B cell (primary cell): ENCODE measurements at regions of chr5 and their contacts with region 1.

Region 1: GRCh38 chr5:159106569-159107282 is 7.0 kb upstream of the EBF1 start:
- DNase-seq: peak; percentile 88
- ATAC-seq: peak; percentile 75
- H3K4me3 ChIP-seq: peak overlapping the region; percentile 44 to 70 (median 66)
- H3K4me3 Mint-ChIP-seq: peak overlapping the region; percentile 100
- H3K27ac ChIP-seq: no peak overlapping the region
- H3K27ac Mint-ChIP-seq: peak overlapping the region; percentile 87
- H3K4me1 ChIP-seq: peaks cover 42 to 48% of the 10 kb centered on the region in 2 donors
- H3K4me1 Mint-ChIP-seq: peaks cover 52% of the 10 kb centered on the region
- H3K27me3 ChIP-seq: no peaks in the 10 kb centered on the region
- H3K27me3 Mint-ChIP-seq: no peaks in the 10 kb centered on the region
- CTCF ChIP-seq: peak; percentile 98

Region 2: DNA sequence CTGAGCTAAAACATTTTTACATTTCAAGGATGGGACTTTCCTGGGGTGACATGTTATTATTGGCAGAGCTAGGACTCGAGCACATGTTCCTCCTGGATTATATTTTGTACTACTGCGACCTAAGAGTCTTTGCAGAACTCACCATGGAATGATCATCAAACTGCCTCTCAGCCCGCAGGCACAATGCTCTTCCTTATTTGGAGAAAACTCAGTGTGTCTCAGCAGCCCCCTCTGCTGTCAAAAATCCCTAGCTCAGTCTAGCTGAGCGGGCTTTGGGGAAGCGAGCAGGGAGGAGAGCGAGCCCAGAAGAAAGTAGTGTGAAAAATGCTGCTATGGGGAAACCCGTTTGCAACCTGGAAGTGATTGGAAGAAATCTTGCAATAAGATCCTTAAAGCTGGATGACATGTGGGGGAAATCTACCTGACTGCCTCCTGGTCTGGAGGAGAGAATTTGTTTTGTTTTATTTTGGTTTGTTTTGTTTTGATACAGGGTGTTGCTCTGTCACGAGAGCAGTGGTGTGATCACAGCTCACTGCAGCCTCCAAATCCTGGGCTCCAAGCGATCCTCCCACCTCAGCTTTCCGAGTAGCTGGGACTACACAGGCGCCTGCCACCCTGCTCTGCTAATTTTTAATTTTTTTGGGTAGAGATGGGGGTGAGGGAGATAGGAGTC is 1157.9 kb before region 1 on chr5:
- CTCF ChIA-PET with region 1: interaction called, 6 read pairs
- POLR2A ChIA-PET with region 1: no interaction called
- intact Hi-C with region 1: loop called (anchors 2 kb)
- DNase-seq: peak; percentile 89
- ATAC-seq: peak; percentile 98
- H3K4me3 ChIP-seq: no peak overlapping the region
- H3K4me3 Mint-ChIP-seq: peak overlapping the region; percentile 33
- H3K27ac ChIP-seq: no peak overlapping the region
- H3K27ac Mint-ChIP-seq: no peak overlapping the region
- H3K4me1 ChIP-seq: peaks cover 6 to 8% of the 10 kb centered on the region in 2 donors
- H3K4me1 Mint-ChIP-seq: peaks cover 5% of the 10 kb centered on the region
- H3K27me3 ChIP-seq: peaks cover 0 to 4% (median 0%) of the 10 kb centered on the region in 4 experiments
- H3K27me3 Mint-ChIP-seq: peaks cover 18% of the 10 kb centered on the region
- CTCF ChIP-seq: peak; percentile 87

Region 3: DNA sequence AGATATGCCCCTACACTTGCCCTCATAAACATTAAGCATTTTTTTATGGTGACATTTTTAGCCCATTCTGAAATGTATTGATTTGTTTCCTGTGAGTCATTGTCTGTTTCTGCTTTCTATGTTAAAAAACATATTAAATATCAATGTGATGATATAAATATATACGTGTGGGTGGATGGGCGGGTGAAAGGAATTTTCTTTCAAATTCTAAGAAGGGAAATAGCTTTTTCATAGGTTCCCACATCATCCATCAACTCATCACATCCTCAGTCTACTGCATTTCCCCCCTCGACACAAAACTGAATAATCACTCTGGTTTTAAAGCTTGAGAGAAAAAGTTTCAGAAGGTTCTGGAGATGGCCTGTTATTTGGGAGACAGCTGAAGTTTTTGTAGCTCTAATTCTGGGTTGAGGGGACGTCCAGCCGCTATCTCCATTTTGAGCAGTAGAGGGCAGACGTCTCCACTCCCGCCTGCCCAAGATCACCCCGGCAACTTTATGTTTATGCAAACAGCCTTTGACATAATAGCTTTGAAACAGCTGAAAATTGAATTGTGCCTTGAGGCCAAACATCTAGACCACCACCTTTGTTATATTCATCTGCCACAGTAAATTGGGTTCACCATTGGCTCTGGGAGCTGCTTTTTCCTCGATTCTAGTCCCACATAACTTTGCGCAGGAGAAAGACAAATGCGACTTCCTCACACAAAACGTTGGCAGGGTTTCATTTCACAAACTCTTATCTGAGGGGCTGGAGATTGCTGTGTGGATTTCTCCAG is 1031.5 kb before region 1 on chr5:
- CTCF ChIA-PET with region 1: interaction called, 106 read pairs
- POLR2A ChIA-PET with region 1: no interaction called
- intact Hi-C with region 1: loop called (anchors 1 kb)
- DNase-seq: peak; percentile 78
- ATAC-seq: peak; percentile 90
- H3K4me3 ChIP-seq: peak overlapping the region in 2 of 5 experiments; percentile 10 to 20
- H3K4me3 Mint-ChIP-seq: peak overlapping the region; percentile 12
- H3K27ac ChIP-seq: no peak overlapping the region
- H3K27ac Mint-ChIP-seq: peak overlapping the region; percentile 43
- H3K4me1 ChIP-seq: peaks cover 12 to 20% of the 10 kb centered on the region in 2 donors
- H3K4me1 Mint-ChIP-seq: peaks cover 21% of the 10 kb centered on the region
- H3K27me3 ChIP-seq: peaks cover 0 to 3% (median 0%) of the 10 kb centered on the region in 4 experiments
- H3K27me3 Mint-ChIP-seq: no peaks in the 10 kb centered on the region
- CTCF ChIP-seq: peak; percentile 82

Region 4: DNA sequence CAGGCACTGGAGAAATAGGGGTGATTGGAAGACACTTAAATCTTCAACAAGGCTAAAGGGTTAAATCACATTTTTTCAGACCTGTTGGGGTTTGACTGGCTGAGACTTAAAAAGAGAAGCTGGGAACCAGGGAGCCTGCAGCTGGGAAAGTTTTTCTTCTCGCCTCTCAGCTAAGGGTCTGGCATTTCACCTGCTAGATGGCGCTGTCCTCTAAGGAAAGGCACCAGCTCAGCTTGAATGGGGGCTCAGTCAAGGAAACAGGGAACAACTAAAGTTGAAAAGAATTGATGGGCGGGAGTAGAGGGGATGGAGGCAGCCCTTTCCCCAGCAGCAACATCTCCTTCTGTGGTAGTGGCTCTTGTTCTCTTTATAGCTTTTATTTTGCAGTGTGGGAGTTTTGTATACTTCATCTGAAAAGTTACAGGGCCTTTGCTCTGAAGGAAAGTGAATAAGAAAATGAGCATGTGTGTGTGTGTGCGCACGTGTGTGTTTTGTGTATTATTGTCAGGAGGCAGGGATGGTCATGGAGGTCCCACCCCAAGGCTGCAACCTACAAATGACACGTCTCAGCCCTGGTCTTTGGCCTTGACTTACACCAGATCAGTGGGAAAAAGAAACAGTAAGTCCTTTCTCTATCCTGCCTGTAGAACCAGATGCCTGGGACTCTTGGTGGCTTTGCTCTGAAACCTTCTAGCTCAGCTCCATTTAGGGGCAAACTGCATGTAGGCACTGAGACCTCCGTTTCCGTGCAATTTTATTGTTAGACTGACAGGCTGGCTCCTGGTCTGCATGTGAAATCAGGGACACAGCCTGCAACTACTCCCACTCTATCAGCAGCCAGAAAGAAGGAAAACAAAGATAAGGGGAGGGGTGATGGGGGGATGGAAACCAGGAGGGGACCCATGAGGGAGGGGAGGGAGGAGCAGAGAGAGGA is 931.5 kb before region 1 on chr5:
- CTCF ChIA-PET with region 1: interaction called, 238 read pairs
- POLR2A ChIA-PET with region 1: interaction called, 17 read pairs
- intact Hi-C with region 1: loop called (anchors 1 kb)
- DNase-seq: peak; percentile 82
- ATAC-seq: peak; percentile 88
- H3K4me3 ChIP-seq: no peak overlapping the region
- H3K4me3 Mint-ChIP-seq: no peak overlapping the region
- H3K27ac ChIP-seq: no peak overlapping the region
- H3K27ac Mint-ChIP-seq: no peak overlapping the region
- H3K4me1 ChIP-seq: peaks cover 22 to 34% of the 10 kb centered on the region in 2 donors
- H3K4me1 Mint-ChIP-seq: peaks cover 30% of the 10 kb centered on the region
- H3K27me3 ChIP-seq: no peaks in the 10 kb centered on the region
- H3K27me3 Mint-ChIP-seq: no peaks in the 10 kb centered on the region
- CTCF ChIP-seq: peak; percentile 82

Region 5: GRCh38 chr5:158875272-158875679 is 231.4 kb before region 1 on chr5:
- CTCF ChIA-PET with region 1: interaction called, 15 read pairs
- POLR2A ChIA-PET with region 1: no interaction called
- intact Hi-C with region 1: loop called (anchors 2 kb)
- DNase-seq: peak; percentile 70
- ATAC-seq: peak; percentile 41
- H3K4me3 ChIP-seq: peak overlapping the region in 2 of 5 experiments; percentile 12 to 34
- H3K4me3 Mint-ChIP-seq: peak overlapping the region; percentile 84
- H3K27ac ChIP-seq: peak overlapping the region; percentile 74 to 80
- H3K27ac Mint-ChIP-seq: peak overlapping the region; percentile 76
- H3K4me1 ChIP-seq: peaks cover 71 to 81% of the 10 kb centered on the region in 2 donors
- H3K4me1 Mint-ChIP-seq: peaks cover 89% of the 10 kb centered on the region
- H3K27me3 ChIP-seq: no peaks in the 10 kb centered on the region
- H3K27me3 Mint-ChIP-seq: no peaks in the 10 kb centered on the region
- CTCF ChIP-seq: no peak

Region 6: DNA sequence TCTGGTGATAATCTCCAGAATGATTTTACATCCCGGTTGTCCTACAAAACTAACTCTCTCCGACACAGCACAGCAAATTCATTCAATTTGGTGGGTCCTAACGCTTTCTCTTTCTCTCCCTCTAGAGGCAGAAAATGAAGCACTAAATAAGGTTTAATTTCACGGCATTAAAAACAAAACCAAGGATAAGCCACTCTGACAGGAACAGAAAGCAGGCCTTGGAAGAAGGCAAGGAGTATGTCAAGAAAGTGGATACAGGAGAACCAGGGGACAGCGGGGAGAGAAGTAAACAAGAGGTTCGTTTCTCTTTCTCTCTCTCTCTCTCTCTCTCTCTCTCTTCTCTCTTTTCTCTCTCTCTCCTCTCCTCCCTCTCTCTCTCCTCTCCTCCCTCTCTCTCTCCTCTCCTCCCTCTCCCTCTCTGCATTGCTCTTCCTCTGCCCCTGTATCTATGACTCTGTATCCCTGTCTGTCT is 56.8 kb before region 1 on chr5:
- CTCF ChIA-PET with region 1: interaction called, 15 read pairs
- POLR2A ChIA-PET with region 1: no interaction called
- intact Hi-C with region 1: no loop called
- DNase-seq: peak; percentile 57
- ATAC-seq: no peak
- H3K4me3 ChIP-seq: peak overlapping the region in 3 of 5 experiments; percentile 16 to 28 (median 17)
- H3K4me3 Mint-ChIP-seq: peak overlapping the region; percentile 91
- H3K27ac ChIP-seq: peak overlapping the region; percentile 74 to 80
- H3K27ac Mint-ChIP-seq: peak overlapping the region; percentile 92
- H3K4me1 ChIP-seq: peaks cover 65 to 68% of the 10 kb centered on the region in 2 donors
- H3K4me1 Mint-ChIP-seq: peaks cover 95% of the 10 kb centered on the region
- H3K27me3 ChIP-seq: no peaks in the 10 kb centered on the region
- H3K27me3 Mint-ChIP-seq: no peaks in the 10 kb centered on the region
- CTCF ChIP-seq: peak; percentile 61

Region 7: GRCh38 chr5:159133041-159133741 is 26.5 kb after region 1 on chr5:
- CTCF ChIA-PET with region 1: interaction called, 28 read pairs
- POLR2A ChIA-PET with region 1: no interaction called
- intact Hi-C with region 1: no loop called
- DNase-seq: peak; percentile 71
- ATAC-seq: peak; percentile 58
- H3K4me3 ChIP-seq: no peak overlapping the region
- H3K4me3 Mint-ChIP-seq: no peak overlapping the region
- H3K27ac ChIP-seq: no peak overlapping the region
- H3K27ac Mint-ChIP-seq: no peak overlapping the region
- H3K4me1 ChIP-seq: no peaks in the 10 kb centered on the region
- H3K4me1 Mint-ChIP-seq: no peaks in the 10 kb centered on the region
- H3K27me3 ChIP-seq: no peaks in the 10 kb centered on the region
- H3K27me3 Mint-ChIP-seq: peaks cover 13% of the 10 kb centered on the region
- CTCF ChIP-seq: peak; percentile 91